CD4-positive, alpha-beta T cell (primary cell): ENCODE measurements at regions of chr1 and their contacts with region 1.

Region 1: DNA sequence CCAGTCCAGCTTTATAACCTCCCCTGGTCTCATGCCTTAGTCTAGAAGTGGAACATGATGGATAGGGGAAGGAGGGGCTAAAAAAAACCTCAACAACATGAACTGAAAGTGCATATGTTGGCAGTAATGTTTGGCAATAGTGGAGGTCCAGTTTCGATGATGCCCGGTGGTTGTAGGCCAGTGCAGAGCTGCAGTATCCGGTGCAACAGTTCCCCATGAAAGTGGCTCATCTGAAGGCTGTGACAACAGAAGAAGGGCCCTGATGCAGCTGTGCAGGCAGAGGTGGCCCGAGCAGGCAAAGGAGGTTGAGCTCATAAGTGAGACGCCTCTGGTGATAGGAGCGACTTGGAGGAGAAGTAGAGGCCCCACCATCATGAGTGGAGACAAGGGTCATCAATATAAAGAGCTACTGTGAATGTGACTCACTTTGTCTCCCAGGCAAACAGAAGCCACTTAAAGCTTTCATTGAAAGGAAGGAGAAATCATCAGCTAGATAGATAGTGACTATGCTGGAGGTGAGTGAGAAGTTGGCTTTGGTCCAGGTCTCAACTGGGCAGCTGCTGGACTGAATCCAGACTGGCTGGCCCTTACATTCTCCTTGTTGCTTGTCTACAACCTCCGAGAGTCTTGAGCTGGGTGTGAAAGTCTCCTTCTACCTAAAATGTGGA is 10.2 kb upstream of the CREG1 start:
- DNase-seq: peak in 3 of 14 experiments; percentile 19 to 58 (median 44)
- ATAC-seq: no peak
- H3K4me3 ChIP-seq: no peak overlapping the region
- H3K4me3 Mint-ChIP-seq: no peak overlapping the region
- H3K27ac ChIP-seq: no peak overlapping the region
- H3K27ac Mint-ChIP-seq: no peak overlapping the region
- H3K4me1 ChIP-seq: no peaks in the 10 kb centered on the region
- H3K4me1 Mint-ChIP-seq: no peaks in the 10 kb centered on the region
- H3K27me3 ChIP-seq: no peaks in the 10 kb centered on the region
- H3K27me3 Mint-ChIP-seq: no peaks in the 10 kb centered on the region
- CTCF ChIP-seq: no peak

Region 2: DNA sequence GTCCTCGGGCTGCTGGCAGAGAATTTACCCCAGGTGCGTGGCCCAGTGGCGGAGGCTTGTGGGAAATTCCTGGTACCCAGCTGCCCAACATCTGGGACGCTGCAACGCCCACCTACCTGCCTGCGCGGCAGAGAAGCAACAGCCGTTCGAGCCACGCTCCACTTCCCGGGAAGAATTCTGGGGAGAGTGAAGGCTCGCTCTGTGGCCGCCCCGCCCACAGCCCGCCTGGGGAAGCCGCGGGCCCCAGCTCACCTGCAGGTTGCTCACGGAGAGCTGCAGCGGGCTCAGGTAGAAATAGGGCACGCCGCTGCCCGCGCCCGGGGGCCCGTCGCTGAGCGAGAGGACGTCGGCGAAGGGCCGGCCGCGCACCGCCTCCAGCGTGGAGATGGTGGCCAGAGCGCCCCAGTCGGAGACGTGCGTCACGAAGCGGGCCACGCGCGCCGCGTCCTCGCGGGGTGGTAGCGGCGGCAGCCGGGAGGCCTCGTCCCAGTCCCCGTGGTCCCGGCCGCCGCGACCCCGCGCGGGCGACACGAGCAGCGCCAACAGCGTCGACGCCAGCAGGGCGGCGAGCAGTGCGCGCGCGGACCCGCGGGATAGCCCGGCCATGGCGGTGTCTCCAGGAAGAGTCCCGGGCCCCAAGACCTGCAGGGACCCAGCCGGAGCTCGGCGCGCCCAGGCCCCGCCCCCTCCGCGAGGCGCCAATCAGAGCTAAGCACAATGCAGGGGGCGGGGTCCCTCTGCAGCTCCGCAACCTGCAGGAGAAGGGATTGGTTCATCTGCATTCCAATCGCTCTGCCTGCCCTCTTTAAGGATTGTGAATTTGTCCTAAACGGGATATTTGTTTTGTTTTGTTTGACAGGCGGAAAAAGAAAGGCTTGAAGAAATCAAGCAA is 10.3 kb before region 1 on chr1 and contains the start of gene CREG1:
- CTCF ChIA-PET with region 1: interaction called, 5 read pairs
- POLR2A ChIA-PET with region 1: interaction called, 11 read pairs
- intact Hi-C with region 1: no loop called
- DNase-seq: peak; percentile 76 to 95 (median 86)
- ATAC-seq: peak; percentile 97
- H3K4me3 ChIP-seq: peak within 1 kb of the TSS; percentile 75
- H3K4me3 Mint-ChIP-seq: peak within 1 kb of the TSS; percentile 96
- H3K27ac ChIP-seq: peak within 1 kb of the TSS in 1 of 2 donors; percentile 25
- H3K27ac Mint-ChIP-seq: peak within 1 kb of the TSS; percentile 81
- H3K4me1 ChIP-seq: peaks cover 25% of the 10 kb centered on the region
- H3K4me1 Mint-ChIP-seq: peaks cover 42% of the 10 kb centered on the region
- H3K27me3 ChIP-seq: no peaks in the 10 kb centered on the region
- H3K27me3 Mint-ChIP-seq: no peaks in the 10 kb centered on the region
- CTCF ChIP-seq: no peak
- total RNA-seq, gene CREG1: 10.7 to 11.2 TPM